Brain microvascular endothelial cell (primary cell): ENCODE measurements at regions of chr3 and their contacts with region 1.

Region 1: GRCh38 chr3:96863129-96863740 is 48.8 kb downstream of the EPHA6 start:
- DNase-seq: peak; percentile 3
- H3K4me3 ChIP-seq: no peak overlapping the region
- H3K27ac ChIP-seq: no peak overlapping the region
- H3K27me3 ChIP-seq: no peaks in the 10 kb centered on the region
- CTCF ChIP-seq: peak; percentile 80

Region 2: DNA sequence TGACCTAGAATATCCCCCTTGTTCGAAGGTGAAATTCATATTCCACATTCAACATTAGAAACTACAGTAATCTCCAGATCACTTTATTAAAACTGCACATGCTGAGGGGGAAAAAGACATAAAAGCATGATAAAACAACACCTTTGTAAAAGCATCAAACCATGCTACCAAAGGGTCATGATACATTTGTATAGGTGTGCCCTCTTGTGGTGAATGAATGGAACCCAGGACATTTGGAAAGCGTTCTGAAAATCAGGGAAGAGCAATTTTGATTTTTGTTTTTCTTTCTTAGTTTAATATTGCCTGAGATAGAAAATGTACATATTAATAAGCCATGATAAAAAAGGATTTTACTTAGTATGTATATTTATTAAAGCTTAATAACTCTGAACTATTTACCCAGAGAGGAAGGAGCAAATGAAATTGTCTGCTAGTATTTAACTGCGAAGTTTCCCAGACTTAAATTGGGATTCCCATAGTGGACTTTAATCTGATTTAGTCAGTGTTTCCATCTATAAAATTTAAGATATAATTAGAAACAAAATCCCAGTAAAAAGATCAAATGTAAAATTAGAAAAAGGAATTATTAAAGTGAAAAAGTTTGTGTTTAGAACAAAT is 795.5 kb after region 1 on chr3:
- in situ Hi-C with region 1: loop called (anchors 25 kb)
- DNase-seq: no peak
- H3K4me3 ChIP-seq: no peak overlapping the region
- H3K27ac ChIP-seq: no peak overlapping the region
- H3K27me3 ChIP-seq: no peaks in the 10 kb centered on the region
- CTCF ChIP-seq: peak; percentile 62